ENCODE measurements at regions of chr16 and their contacts with region 1.

Region 1: DNA sequence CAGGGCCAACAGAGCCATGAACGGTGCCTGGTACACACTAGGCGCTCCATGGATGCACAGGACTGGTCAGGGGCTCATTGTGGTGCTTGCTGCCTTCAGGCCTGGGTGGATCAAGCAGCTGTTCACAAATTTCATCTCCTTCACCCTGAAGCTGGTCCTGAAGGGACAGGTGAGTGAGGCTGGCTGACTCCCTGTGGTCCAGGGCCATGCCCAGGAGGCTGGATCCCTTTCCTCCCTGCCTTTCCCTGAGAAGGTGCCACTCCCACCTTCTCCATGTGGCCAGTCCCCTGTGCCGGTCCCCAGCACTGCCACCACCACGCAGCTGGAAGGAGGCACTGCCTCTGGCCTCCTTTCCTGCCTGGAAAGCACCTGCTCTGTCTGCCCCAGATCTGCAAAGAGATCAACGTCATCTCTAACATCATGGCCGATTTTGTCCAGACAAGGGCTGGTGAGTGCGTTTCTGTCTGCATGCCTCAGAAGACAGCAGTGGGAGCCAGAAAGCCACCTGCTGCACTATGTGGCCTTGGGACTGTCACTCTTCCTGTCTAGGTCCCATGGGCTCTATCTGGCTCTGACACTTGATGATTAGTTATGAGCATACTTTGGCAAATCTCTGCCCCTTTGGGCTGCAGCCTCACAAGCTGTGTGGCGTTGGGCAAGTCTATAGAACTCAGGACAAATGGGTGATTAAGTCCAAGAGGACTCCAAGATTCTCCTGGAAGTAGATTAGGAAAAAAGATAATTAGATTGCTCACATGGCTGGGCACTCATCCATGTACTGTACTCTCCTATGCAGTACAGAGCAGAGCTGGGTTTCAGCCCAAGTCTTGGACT is 9.4 kb downstream of the CETP start:
- DNase-seq: no peak
- H3K4me3 ChIP-seq: no peak overlapping the region
- H3K27ac ChIP-seq: no peak overlapping the region
- H3K4me1 ChIP-seq: no peaks in the 10 kb centered on the region
- H3K27me3 ChIP-seq: no peaks in the 10 kb centered on the region
- CTCF ChIP-seq: no peak

Region 2: GRCh38 chr16:56916571-56917403 is 54.4 kb before region 1 on chr16:
- intact Hi-C with region 1: no loop called
- DNase-seq: no peak
- H3K4me3 ChIP-seq: no peak overlapping the region
- H3K27ac ChIP-seq: peak overlapping the region; percentile 50
- H3K4me1 ChIP-seq: no peaks in the 10 kb centered on the region
- H3K27me3 ChIP-seq: no peaks in the 10 kb centered on the region
- CTCF ChIP-seq: no peak

Region 3: DNA sequence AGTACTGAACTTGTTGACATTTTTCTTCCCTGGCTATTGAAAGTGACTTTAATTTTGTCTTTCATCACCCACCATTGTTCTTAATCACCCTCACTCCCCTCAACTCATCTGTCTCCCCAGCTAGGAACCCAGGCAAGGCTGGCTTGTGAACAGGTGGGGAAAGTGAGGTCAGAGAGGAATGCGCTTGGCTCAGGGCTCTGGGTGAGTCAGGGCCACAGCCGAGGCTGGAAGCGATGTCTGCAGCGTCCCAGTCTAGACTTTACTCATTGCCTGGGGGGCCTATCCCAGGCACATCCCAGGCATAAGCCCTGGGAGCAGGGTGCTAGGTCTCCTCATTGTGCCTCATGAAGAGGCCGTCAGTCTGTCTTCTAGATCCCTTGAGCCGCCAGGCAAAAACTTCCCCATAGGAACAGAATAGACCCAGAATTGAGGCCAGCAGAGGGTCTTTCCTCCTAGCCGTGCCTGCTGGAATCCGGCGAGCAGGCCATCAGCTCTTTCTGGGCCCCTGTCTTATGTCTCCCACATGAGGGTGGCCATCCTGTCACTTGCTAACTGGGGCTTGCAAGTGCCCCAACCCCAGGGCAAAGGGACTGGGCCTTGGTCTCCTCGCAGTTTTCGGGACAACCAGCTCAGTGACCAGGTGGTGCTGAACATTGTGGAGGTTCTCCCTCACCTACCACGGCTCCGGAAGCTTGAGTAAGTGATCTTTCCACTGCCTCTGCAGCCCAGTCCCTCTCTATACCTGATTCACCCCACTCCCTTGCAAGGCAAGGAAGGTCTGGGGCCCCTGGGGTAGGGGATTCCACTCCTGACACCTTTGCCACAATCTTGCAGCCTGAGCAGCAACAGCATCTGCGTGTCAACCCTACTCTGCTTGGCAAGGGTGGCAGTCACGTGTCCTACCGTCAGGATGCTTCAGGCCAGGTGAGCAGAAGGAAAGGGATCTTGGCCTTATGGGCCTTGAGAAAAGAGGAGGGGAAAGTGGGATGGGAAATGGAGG is 58.3 kb after region 1 on chr16:
- intact Hi-C with region 1: loop called (anchors 5 kb)
- DNase-seq: no peak
- H3K4me3 ChIP-seq: no peak overlapping the region
- H3K27ac ChIP-seq: no peak overlapping the region
- H3K4me1 ChIP-seq: no peaks in the 10 kb centered on the region
- H3K27me3 ChIP-seq: no peaks in the 10 kb centered on the region
- CTCF ChIP-seq: no peak

Measured in colonic mucosa (tissue), 4 donors.